ENCODE measurements at regions of chr7 and their contacts with region 1.

Region 1: GRCh38 chr7:139359366-139360209 is at the start of gene LUC7L2:
- DNase-seq: peak; percentile 99
- H3K4me3 ChIP-seq: peak within 1 kb of the TSS; percentile 90 to 100
- H3K4me3 Mint-ChIP-seq: peak within 1 kb of the TSS; percentile 96 to 100 (median 99)
- H3K27ac ChIP-seq: peak within 1 kb of the TSS; percentile 98
- H3K27ac Mint-ChIP-seq: peak within 1 kb of the TSS; percentile 98 to 99 (median 99)
- H3K4me1 ChIP-seq: peaks cover 47% of the 10 kb centered on the region
- H3K4me1 Mint-ChIP-seq: peaks cover 20 to 65% (median 38%) of the 10 kb centered on the region in 4 donors
- H3K27me3 ChIP-seq: no peaks in the 10 kb centered on the region
- H3K27me3 Mint-ChIP-seq: no peaks in the 10 kb centered on the region
- total RNA-seq, gene LUC7L2: 131 to 133 TPM

Region 2: GRCh38 chr7:139109188-139109982 is 250.2 kb before region 1 on chr7 and contains the start of gene ZC3HAV1:
- CTCF ChIA-PET with region 1: no interaction called
- POLR2A ChIA-PET with region 1: interaction called, 7 read pairs
- intact Hi-C with region 1: loop called (anchors 5 kb)
- DNase-seq: peak; percentile 89 to 94 (median 93)
- H3K4me3 ChIP-seq: peak within 1 kb of the TSS; percentile 90 to 96
- H3K4me3 Mint-ChIP-seq: peak within 1 kb of the TSS; percentile 95 to 99 (median 97)
- H3K27ac ChIP-seq: peak within 1 kb of the TSS; percentile 96
- H3K27ac Mint-ChIP-seq: peak within 1 kb of the TSS; percentile 88 to 100 (median 99)
- H3K4me1 ChIP-seq: peaks cover 29% of the 10 kb centered on the region
- H3K4me1 Mint-ChIP-seq: peaks cover 28 to 59% (median 38%) of the 10 kb centered on the region in 4 donors
- H3K27me3 ChIP-seq: no peaks in the 10 kb centered on the region
- H3K27me3 Mint-ChIP-seq: no peaks in the 10 kb centered on the region
- total RNA-seq, gene ZC3HAV1: 154 to 159 TPM

Region 3: DNA sequence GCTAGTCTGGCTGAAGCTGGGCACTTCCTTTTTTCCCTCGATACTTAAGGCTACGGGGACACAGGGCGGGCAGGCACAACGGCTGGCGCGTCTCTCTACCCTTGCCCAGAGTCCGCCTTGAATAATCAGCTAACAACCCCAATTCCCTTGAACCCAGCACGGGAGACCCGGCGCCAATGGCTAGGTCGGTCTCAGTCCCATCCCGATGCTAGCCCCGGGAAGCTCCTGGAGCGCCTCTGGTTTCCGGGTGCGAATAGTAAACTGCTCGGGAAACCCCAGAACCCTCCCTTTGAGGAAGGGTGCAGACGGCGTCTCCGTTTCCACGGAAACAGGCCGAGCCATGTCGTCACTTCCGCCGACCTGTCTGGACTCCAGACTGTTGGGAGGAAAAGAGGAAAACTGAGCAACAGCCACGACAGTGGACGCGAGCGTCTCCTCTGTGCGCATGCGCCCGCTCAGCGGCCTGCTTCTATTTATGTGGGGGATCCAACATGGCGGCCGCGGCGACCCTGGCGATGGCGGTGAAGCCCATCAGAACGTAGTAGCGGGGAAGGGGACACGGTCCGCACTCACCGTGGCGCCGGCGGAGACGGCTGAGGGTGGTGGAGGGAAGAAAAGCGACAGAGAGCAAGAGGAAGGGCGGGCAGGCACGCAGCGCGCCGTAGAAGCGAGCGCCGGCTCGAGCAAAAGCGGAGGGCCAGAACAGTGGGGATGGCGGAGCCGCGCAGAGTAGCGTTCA is 128.6 kb before region 1 on chr7 and contains the start of gene UBN2:
- CTCF ChIA-PET with region 1: no interaction called
- POLR2A ChIA-PET with region 1: interaction called, 5 read pairs
- intact Hi-C with region 1: loop called (anchors 1 kb)
- DNase-seq: peak; percentile 79 to 90 (median 80)
- H3K4me3 ChIP-seq: peak within 1 kb of the TSS; percentile 79 to 96
- H3K4me3 Mint-ChIP-seq: peak within 1 kb of the TSS; percentile 98 to 100 (median 100)
- H3K27ac ChIP-seq: peak within 1 kb of the TSS; percentile 74
- H3K27ac Mint-ChIP-seq: peak within 1 kb of the TSS; percentile 96 to 100 (median 98)
- H3K4me1 ChIP-seq: peaks cover 19% of the 10 kb centered on the region
- H3K4me1 Mint-ChIP-seq: peaks cover 10 to 36% (median 24%) of the 10 kb centered on the region in 4 donors
- H3K27me3 ChIP-seq: no peaks in the 10 kb centered on the region
- H3K27me3 Mint-ChIP-seq: no peaks in the 10 kb centered on the region
- total RNA-seq, gene UBN2: 23.6 to 26.7 TPM

Region 4: GRCh38 chr7:139370301-139370942 is 10.8 kb after region 1 on chr7:
- CTCF ChIA-PET with region 1: interaction called, 3 read pairs
- POLR2A ChIA-PET with region 1: interaction called, 27 read pairs
- intact Hi-C with region 1: no loop called
- DNase-seq: no peak
- H3K4me3 ChIP-seq: no peak overlapping the region
- H3K4me3 Mint-ChIP-seq: peak overlapping the region in 6 of 8 donors; percentile 7 to 44 (median 30)
- H3K27ac ChIP-seq: no peak overlapping the region
- H3K27ac Mint-ChIP-seq: peak overlapping the region; percentile 52 to 90 (median 68)
- H3K4me1 ChIP-seq: peaks cover 77% of the 10 kb centered on the region
- H3K4me1 Mint-ChIP-seq: peaks cover 51 to 83% (median 65%) of the 10 kb centered on the region in 4 donors
- H3K27me3 ChIP-seq: no peaks in the 10 kb centered on the region
- H3K27me3 Mint-ChIP-seq: no peaks in the 10 kb centered on the region

Region 5: DNA sequence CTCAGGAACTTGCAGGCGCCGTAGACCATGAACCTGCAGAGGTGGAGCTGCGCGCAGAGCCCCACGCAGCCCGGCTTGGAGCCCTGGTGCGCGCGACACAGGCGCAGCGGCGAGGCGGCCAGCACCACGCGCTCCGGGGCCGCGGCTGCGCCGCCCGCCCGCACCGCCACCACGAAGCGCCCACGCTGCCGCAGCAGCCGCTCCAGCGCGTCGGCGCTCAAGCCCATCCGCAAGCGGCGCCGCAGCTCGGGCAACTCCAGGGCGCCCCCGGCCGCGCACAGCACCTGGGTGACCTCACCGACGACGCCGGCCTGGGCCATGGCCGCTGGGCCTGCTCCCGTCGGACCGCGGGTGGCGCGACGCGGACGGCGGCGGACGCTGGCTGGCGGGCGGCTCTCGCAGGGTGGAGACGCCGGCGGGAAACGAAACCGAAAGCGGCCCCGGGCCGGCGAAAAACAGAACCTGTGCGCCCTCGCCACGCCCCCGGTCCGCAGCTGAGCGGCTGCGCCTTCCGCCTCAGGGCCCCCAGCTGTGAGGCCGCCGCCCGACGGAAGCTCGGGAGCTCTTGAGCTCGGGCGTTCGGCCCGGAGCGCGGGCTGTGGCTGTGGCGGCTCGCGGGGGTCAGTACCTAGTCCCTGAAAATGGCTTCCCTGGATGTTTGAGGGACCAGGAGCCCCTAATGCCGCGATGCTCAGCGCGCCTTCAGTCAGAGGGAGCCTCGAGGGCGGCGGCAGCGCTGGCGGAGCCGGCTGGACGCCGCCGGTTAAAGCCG is 703.1 kb after region 1 on chr7 and contains the start of gene PARP12:
- CTCF ChIA-PET with region 1: no interaction called
- POLR2A ChIA-PET with region 1: no interaction called
- intact Hi-C with region 1: loop called (anchors 1 kb)
- DNase-seq: peak; percentile 84 to 89 (median 86)
- H3K4me3 ChIP-seq: peak within 1 kb of the TSS; percentile 54 to 89
- H3K4me3 Mint-ChIP-seq: peak within 1 kb of the TSS; percentile 92 to 96 (median 95)
- H3K27ac ChIP-seq: peak within 1 kb of the TSS; percentile 84
- H3K27ac Mint-ChIP-seq: peak within 1 kb of the TSS; percentile 86 to 99 (median 91)
- H3K4me1 ChIP-seq: peaks cover 45% of the 10 kb centered on the region
- H3K4me1 Mint-ChIP-seq: peaks cover 31 to 56% (median 43%) of the 10 kb centered on the region in 4 donors
- H3K27me3 ChIP-seq: no peaks in the 10 kb centered on the region
- H3K27me3 Mint-ChIP-seq: no peaks in the 10 kb centered on the region
- total RNA-seq, gene PARP12: 91.8 to 96.6 TPM

Measured in CD4-positive, alpha-beta memory T cell (primary cell).